ENCODE measurements at regions of chr12 and their contacts with region 1.

Region 1: DNA sequence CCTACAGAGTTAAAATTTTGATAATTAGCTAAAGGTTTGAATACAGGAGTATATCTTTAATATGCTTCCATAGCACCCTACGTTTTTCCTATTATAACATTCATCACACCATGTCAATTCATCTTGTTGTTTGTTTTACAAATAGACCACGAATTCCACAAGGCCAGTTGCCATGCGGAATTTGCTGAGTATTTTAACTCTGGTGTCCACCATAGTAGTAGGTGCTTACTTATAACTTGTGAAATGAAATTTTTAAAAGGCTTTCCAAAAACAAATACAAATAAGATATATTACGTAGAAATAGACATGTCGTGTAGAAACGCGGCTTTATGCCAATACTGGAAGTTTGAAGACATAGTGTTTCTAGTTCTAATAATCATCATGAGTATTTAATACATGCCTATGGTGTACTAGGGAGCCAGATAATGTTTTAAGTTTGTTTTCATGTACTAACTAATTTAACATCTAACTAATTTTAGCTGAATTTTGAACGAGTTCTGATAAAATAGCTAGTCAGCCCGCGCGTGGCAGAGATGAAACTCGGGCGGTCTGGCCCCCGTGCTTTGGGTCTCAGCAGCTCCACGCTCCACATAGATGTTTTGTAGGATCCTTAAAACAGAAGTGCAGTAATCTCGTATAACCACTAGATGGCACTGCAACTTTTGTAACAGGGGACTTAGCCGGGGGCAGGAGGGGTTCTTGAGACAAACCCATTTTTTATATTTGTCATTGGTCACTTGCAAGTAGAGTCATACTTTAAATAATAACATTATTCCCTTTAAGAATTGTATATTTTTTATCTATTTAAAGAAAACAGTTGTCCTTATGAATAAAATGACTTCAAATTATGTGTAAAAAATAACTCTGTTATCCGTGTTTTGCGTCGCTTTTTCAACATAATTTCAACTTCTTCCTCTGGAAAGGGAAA is 10.2 kb downstream of the CD69 start:
- DNase-seq: no peak
- H3K4me3 ChIP-seq: no peak overlapping the region
- H3K27me3 ChIP-seq: no peaks in the 10 kb centered on the region
- CTCF ChIP-seq: peak; percentile 84

Region 2: GRCh38 chr12:9730011-9730410 is 20.5 kb before region 1 on chr12:
- CTCF ChIA-PET with region 1: interaction called, 16 read pairs
- POLR2A ChIA-PET with region 1: no interaction called
- DNase-seq: no peak
- H3K4me3 ChIP-seq: no peak overlapping the region
- H3K27me3 ChIP-seq: no peaks in the 10 kb centered on the region
- CTCF ChIP-seq: no peak

Region 3: DNA sequence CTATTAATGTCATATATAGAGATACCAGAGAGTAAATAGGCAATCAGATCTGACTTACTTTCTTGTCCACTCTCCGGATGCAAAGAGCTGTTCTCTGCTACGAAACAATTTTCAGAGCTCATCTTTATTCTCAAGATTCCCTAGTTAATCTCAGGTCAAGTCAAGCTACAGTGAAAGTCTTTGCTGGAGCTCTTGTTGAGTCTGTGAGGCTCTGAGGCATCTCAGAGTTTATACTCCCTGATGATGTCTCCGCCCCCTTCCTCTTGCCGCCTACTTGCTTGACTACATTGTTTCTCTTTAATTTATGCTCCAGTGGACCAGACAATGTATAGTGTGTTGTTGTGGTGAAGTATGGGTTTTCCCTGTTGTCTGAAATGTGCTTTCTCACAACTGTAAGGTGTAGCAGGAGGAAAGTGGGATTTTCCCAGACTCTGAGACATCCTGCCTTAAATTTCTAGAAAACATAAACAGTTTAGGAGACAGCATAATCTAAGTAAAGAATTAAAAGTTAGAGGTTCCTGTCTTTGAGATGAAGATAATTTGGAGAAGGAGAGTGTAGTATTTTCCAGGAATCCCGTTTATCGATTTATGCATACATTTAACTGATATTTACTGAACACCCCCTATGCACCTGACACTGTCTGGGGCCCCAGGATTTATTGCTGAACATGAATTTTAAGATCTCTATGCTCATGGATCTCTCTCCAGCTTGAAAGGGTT is 10.3 kb after region 1 on chr12 and contains the start of gene CD69:
- CTCF ChIA-PET with region 1: interaction called, 28 read pairs
- POLR2A ChIA-PET with region 1: no interaction called
- DNase-seq: no peak
- H3K4me3 ChIP-seq: no peak within 1 kb of the TSS
- H3K27me3 ChIP-seq: no peaks in the 10 kb centered on the region
- CTCF ChIP-seq: no peak
- polyA plus RNA-seq, gene CD69: not detected in 2 replicates

Region 4: DNA sequence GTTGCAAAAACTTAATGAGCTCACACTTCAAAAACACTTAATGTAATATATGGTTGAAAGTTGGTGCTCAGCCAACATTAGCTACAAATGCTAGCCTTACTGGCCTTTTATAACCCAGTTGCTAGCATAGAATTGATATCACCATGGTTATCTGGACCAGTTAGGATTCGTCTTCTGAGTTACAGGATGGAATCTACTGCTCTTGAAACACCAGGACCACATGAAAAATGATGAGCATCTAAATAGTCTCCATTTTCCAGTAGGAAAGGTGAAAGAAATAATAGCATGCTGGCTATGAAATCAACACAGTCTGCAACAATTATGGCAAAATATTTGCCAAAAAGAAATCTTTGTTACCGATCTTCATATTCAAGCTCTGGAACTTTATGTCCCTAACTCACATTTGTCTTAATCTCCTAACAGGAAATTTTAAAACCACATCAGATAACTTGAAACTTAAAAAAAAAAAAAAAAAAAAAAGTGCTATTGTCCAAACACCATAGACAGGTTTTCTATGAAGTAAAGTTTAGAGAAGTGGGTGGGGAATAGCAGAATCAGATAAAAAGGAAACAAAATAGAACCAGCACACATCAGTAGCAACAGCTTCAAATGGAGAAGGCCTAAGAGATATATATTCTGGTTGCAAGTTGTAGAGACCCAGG is 22.8 kb after region 1 on chr12:
- CTCF ChIA-PET with region 1: interaction called, 15 read pairs
- POLR2A ChIA-PET with region 1: no interaction called
- DNase-seq: no peak
- H3K4me3 ChIP-seq: no peak overlapping the region
- H3K27me3 ChIP-seq: no peaks in the 10 kb centered on the region
- CTCF ChIP-seq: no peak

Region 5: GRCh38 chr12:9797722-9798619 is 47.4 kb after region 1 on chr12:
- CTCF ChIA-PET with region 1: interaction called, 27 read pairs
- POLR2A ChIA-PET with region 1: no interaction called
- DNase-seq: no peak
- H3K4me3 ChIP-seq: no peak overlapping the region
- H3K27me3 ChIP-seq: no peaks in the 10 kb centered on the region
- CTCF ChIP-seq: peak; percentile 45

Region 6: DNA sequence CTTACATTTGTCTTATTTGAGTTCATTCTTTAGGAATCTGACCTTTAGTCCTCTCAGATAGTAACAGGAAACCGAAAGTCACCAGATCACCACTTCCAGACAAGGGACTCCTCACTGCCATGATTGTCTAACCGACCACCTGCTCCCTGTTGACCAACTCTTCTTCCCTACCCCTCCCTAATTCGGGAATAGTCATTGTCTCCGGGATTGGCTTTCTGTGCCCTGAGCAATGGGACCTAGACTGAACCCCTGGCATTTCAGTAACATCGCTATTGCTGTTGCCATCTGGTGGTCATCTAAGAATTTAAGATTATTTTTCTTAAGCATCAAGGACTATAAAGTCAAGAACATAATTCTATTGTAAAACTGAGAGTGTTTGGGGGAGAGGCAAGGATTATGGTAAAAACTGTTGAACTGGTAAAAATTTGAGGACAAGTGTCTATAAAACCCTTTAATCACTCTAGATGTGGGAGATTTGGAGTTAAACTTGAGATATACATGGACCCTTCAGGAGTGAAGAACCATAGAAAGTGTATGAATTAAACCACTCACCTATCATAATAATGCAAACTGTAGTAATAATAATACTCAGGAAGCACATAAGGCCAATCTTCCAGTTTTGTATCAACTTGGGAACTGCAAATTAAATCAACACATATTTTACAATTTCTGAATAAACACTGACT is 175.3 kb after region 1 on chr12:
- CTCF ChIA-PET with region 1: interaction called, 64 read pairs
- POLR2A ChIA-PET with region 1: no interaction called
- DNase-seq: no peak
- H3K4me3 ChIP-seq: no peak overlapping the region
- H3K27me3 ChIP-seq: no peaks in the 10 kb centered on the region
- CTCF ChIP-seq: peak; percentile 64

Region 7: DNA sequence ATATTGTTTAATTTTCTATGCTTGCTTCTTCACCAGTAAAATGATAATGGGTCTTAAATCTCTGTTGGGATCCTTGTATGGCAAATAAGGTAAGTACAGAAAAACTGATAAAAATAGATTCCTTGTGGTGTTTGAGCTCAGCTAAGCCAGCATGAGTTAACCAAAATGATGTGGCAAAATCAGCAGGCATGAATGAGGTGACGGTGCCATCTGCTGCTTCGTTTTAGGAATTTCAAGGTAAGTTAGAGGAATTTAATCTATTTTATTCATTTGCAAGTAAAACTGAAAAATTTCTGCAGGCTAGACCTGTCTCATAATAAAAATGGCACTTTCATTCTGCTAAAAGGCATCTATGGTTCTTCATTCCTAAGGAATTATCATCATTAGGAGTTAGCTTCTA is 389.5 kb after region 1 on chr12:
- CTCF ChIA-PET with region 1: interaction called, 11 read pairs
- POLR2A ChIA-PET with region 1: no interaction called
- DNase-seq: no peak
- H3K4me3 ChIP-seq: no peak overlapping the region
- H3K27me3 ChIP-seq: no peaks in the 10 kb centered on the region
- CTCF ChIP-seq: peak; percentile 58

Measured in BJ (cell line).